Aorta (tissue), 5 donors: ENCODE measurements at regions of chr2 and their contacts with region 1.

Region 1: DNA sequence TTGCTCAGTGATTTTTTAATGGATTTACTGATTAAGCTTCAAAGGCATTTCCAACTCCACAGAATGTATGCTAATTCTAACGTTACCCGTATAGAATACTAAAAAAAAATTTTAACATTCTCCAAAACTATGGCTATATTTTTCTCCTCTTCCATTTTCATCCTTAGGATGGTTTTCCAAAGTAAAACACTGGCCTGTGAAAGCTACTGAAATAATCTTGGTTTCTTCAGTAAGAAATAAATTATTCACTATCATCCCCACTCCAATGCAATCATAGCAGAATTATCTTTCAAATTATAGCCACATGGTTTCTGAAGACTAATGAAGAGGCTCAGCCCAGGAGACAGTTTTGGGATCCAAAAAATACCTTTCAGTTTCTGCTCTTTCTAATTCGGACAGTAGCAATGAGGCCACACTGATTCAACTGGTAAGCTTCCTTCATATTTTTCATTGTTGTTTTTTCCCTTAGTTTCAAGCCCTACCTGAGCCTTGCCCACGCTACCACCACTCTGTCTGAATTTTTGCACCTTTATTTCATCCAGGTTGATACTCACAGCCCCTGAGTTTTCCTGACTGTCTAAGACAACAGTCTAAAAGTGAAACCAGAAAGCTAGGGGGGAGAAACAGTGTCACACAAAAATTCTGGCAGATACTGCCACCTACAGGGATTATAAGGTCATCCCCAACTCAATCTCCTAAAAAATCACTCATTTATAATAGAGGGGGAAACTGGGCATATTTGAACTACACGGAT is 887.9 kb downstream of the NRXN1 start:
- DNase-seq: no peak
- ATAC-seq: peak; percentile 70
- H3K4me3 ChIP-seq: peak overlapping the region; percentile 36 to 66
- H3K27ac ChIP-seq: no peak overlapping the region
- H3K4me1 ChIP-seq: no peaks in the 10 kb centered on the region
- H3K27me3 ChIP-seq: no peaks in the 10 kb centered on the region

Region 2: GRCh38 chr2:49770919-49771318 is 373.1 kb before region 1 on chr2:
- intact Hi-C with region 1: loop called (anchors 5 to 10 kb)
- DNase-seq: peak; percentile 47 to 79
- ATAC-seq: peak; percentile 58
- H3K4me3 ChIP-seq: no peak overlapping the region
- H3K27ac ChIP-seq: no peak overlapping the region
- H3K4me1 ChIP-seq: no peaks in the 10 kb centered on the region
- H3K27me3 ChIP-seq: no peaks in the 10 kb centered on the region

Region 3: DNA sequence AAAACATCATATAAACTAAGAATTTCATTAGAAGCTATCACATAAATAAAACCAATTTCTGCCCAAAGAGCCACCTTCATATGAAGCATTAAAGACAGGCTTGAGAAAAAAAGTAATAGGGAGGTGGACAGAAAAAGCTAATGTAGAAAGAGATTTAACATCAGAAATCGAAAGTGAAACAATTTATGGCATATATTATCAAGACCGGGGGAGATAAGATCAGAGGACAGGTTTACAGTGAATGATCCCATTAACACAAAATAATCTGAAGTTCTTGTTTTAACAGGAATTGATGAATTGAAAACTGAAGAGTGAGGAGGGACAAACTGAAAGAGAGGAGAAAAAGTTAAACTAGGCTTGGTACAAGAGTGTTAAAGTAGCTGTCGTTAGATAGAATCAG is 203.4 kb before region 1 on chr2:
- intact Hi-C with region 1: no loop called
- DNase-seq: no peak
- ATAC-seq: no peak
- H3K4me3 ChIP-seq: no peak overlapping the region
- H3K27ac ChIP-seq: no peak overlapping the region
- H3K4me1 ChIP-seq: no peaks in the 10 kb centered on the region
- H3K27me3 ChIP-seq: no peaks in the 10 kb centered on the region

Region 4: GRCh38 chr2:50606860-50607259 is 462.9 kb after region 1 on chr2:
- intact Hi-C with region 1: no loop called
- DNase-seq: no peak
- ATAC-seq: no peak
- H3K4me3 ChIP-seq: no peak overlapping the region
- H3K27ac ChIP-seq: no peak overlapping the region
- H3K4me1 ChIP-seq: no peaks in the 10 kb centered on the region
- H3K27me3 ChIP-seq: no peaks in the 10 kb centered on the region